ENCODE measurements at regions of chr10 and their contacts with region 1.

Region 1: GRCh38 chr10:68156373-68157185 is 47.3 kb downstream of the MYPN start:
- DNase-seq: peak in 1 of 2 donors; percentile 54
- ATAC-seq: peak; percentile 71
- H3K4me3 ChIP-seq: no peak overlapping the region
- H3K27ac ChIP-seq: no peak overlapping the region
- H3K4me1 ChIP-seq: peaks cover 0 to 3% of the 10 kb centered on the region in 2 donors
- H3K27me3 ChIP-seq: no peaks in the 10 kb centered on the region

Region 2: DNA sequence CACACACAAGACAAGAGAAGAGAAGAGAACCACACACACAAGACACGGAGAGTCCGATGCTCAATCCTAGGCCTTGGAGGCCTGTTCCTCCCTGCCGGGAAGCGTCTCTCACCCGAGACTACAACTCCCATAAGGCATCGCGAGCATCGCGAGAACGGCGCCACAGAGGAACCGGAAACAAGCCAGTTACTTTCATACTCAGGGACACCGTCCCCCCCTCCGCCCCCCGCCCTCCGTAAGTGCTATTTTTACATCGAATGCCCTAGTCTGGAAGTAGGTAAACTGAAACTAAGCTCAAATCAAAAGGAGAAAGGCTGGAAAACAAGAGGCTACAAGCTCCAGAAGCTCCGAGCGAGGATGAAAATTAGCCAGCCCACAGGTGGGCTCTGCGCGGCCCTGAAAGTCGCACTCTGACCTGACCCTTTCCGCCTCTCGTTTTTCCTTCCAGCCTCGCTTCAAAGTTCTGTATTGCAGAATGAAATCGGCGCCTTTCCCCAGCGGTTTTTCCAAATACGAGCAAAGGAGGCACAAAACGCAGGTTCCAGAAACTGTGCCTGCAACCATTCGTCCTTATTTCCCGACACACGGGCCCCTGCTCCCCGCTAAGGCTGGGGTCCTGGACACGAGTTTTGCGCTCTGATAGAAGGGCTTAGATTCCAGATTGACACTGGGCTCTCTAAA is 307.1 kb before region 1 on chr10:
- intact Hi-C with region 1: loop called in 1 of 2 experiments (anchors 2 kb)
- DNase-seq: peak; percentile 98 to 99
- ATAC-seq: peak; percentile 98
- H3K4me3 ChIP-seq: peak overlapping the region; percentile 89 to 97
- H3K27ac ChIP-seq: peak overlapping the region; percentile 79 to 80
- H3K4me1 ChIP-seq: no peaks in the 10 kb centered on the region
- H3K27me3 ChIP-seq: no peaks in the 10 kb centered on the region

Region 3: GRCh38 chr10:67858971-67859370 is 297.6 kb before region 1 on chr10:
- intact Hi-C with region 1: loop called (anchors 2 to 5 kb)
- DNase-seq: no peak
- ATAC-seq: no peak
- H3K4me3 ChIP-seq: no peak overlapping the region
- H3K27ac ChIP-seq: no peak overlapping the region
- H3K4me1 ChIP-seq: no peaks in the 10 kb centered on the region
- H3K27me3 ChIP-seq: no peaks in the 10 kb centered on the region

Region 4: GRCh38 chr10:68082872-68083271 is 73.7 kb before region 1 on chr10:
- intact Hi-C with region 1: loop called (anchors 2 kb)
- DNase-seq: no peak
- ATAC-seq: no peak
- H3K4me3 ChIP-seq: no peak overlapping the region
- H3K27ac ChIP-seq: no peak overlapping the region
- H3K4me1 ChIP-seq: no peaks in the 10 kb centered on the region
- H3K27me3 ChIP-seq: no peaks in the 10 kb centered on the region

Region 5: GRCh38 chr10:68105820-68106219 is 50.8 kb before region 1 on chr10:
- intact Hi-C with region 1: no loop called
- DNase-seq: no peak
- ATAC-seq: no peak
- H3K4me3 ChIP-seq: no peak overlapping the region
- H3K27ac ChIP-seq: no peak overlapping the region
- H3K4me1 ChIP-seq: no peaks in the 10 kb centered on the region
- H3K27me3 ChIP-seq: no peaks in the 10 kb centered on the region

Region 6: GRCh38 chr10:68135922-68136718 is 20.5 kb before region 1 on chr10:
- intact Hi-C with region 1: loop called in 1 of 2 experiments (anchors 2 kb)
- DNase-seq: no peak
- ATAC-seq: peak; percentile 76
- H3K4me3 ChIP-seq: no peak overlapping the region
- H3K27ac ChIP-seq: peak overlapping the region in 1 of 2 donors; percentile 78
- H3K4me1 ChIP-seq: peaks cover 0 to 2% of the 10 kb centered on the region in 2 donors
- H3K27me3 ChIP-seq: no peaks in the 10 kb centered on the region

Region 7: GRCh38 chr10:68371604-68372003 is 215.0 kb after region 1 on chr10:
- intact Hi-C with region 1: no loop called
- DNase-seq: no peak
- ATAC-seq: no peak
- H3K4me3 ChIP-seq: no peak overlapping the region
- H3K27ac ChIP-seq: no peak overlapping the region
- H3K4me1 ChIP-seq: no peaks in the 10 kb centered on the region
- H3K27me3 ChIP-seq: no peaks in the 10 kb centered on the region

Measured in aorta (tissue), 5 donors.